ENCODE measurements at regions of chr2 and their contacts with region 1.

Region 1: DNA sequence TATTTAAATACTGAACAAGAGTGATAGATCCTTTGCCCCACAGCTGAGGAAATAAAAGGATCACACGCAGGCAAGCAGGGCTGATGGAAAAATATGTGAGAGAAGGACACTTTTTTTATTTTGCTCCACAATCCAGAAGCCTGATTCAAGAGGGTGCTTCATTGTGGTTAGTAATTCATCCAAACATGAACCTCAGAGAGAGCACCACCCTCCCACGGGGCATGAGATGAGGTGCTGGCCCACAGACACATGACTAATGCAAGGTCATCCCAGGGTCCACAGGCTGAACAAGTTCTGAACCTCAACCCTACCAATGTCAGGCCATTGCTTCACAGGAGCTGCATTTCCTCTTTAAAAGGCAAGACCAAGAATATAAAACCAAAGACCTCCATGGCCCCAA is 239.6 kb downstream of the MREG start:
- DNase-seq: no peak
- H3K4me3 ChIP-seq: no peak overlapping the region
- H3K4me3 Mint-ChIP-seq: no peak overlapping the region
- H3K27ac Mint-ChIP-seq: peak overlapping the region; percentile 56
- H3K4me1 ChIP-seq: peaks cover 35% of the 10 kb centered on the region
- H3K4me1 Mint-ChIP-seq: peaks cover 32% of the 10 kb centered on the region
- H3K27me3 ChIP-seq: no peaks in the 10 kb centered on the region
- H3K27me3 Mint-ChIP-seq: no peaks in the 10 kb centered on the region
- CTCF ChIP-seq: no peak

Region 2: GRCh38 chr2:215749092-215749957 is 24.4 kb before region 1 on chr2:
- CTCF ChIA-PET with region 1: no interaction called
- POLR2A ChIA-PET with region 1: no interaction called
- intact Hi-C with region 1: loop called (anchors 1 kb)
- DNase-seq: peak; percentile 39 to 42
- H3K4me3 ChIP-seq: no peak overlapping the region
- H3K4me3 Mint-ChIP-seq: no peak overlapping the region
- H3K27ac Mint-ChIP-seq: peak overlapping the region; percentile 70
- H3K4me1 ChIP-seq: peaks cover 23% of the 10 kb centered on the region
- H3K4me1 Mint-ChIP-seq: peaks cover 21% of the 10 kb centered on the region
- H3K27me3 ChIP-seq: no peaks in the 10 kb centered on the region
- H3K27me3 Mint-ChIP-seq: no peaks in the 10 kb centered on the region
- CTCF ChIP-seq: no peak

Region 3: GRCh38 chr2:215793747-215794595 is 20.2 kb after region 1 on chr2:
- CTCF ChIA-PET with region 1: no interaction called
- POLR2A ChIA-PET with region 1: no interaction called
- intact Hi-C with region 1: loop called (anchors 1 kb)
- DNase-seq: peak in 1 of 2 experiments; percentile 62
- H3K4me3 ChIP-seq: no peak overlapping the region
- H3K4me3 Mint-ChIP-seq: no peak overlapping the region
- H3K27ac Mint-ChIP-seq: peak overlapping the region; percentile 81
- H3K4me1 ChIP-seq: peaks cover 41% of the 10 kb centered on the region
- H3K4me1 Mint-ChIP-seq: peaks cover 48% of the 10 kb centered on the region
- H3K27me3 ChIP-seq: no peaks in the 10 kb centered on the region
- H3K27me3 Mint-ChIP-seq: no peaks in the 10 kb centered on the region
- CTCF ChIP-seq: no peak